ENCODE measurements at regions of chr3 and their contacts with region 1.

Region 1: DNA sequence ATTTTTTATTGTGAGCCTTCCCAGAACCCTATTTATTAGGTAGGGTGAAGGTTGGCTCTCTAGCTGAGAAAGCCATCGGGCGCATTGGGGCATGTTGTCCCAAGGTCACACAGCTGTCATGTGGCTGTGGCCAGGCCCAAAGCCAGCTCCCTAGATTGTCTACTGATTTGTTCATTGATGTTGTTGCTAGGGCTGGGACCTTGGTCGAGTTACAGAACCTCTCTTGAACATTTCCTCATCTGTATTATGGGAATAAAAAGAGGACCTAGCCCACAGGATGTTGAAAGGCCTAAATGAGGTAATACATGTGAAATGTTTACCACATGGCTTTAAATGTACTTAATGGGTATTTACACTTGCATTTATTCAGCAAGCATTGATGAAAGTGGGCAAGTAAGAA is 252.5 kb downstream of the SUCLG2 start:
- DNase-seq: no peak
- H3K4me3 ChIP-seq: no peak overlapping the region
- H3K27ac ChIP-seq: no peak overlapping the region
- H3K4me1 ChIP-seq: no peaks in the 10 kb centered on the region
- H3K27me3 ChIP-seq: no peaks in the 10 kb centered on the region
- CTCF ChIP-seq: no peak
- EP300 ChIP-seq: no peak
- RAD21 ChIP-seq: no peak

Region 2: GRCh38 chr3:67384760-67385397 is 17.0 kb before region 1 on chr3:
- CTCF ChIA-PET with region 1: interaction called, 10 read pairs
- POLR2A ChIA-PET with region 1: no interaction called
- DNase-seq: peak; percentile 42
- H3K4me3 ChIP-seq: no peak overlapping the region
- H3K27ac ChIP-seq: no peak overlapping the region
- H3K4me1 ChIP-seq: no peaks in the 10 kb centered on the region
- H3K27me3 ChIP-seq: no peaks in the 10 kb centered on the region
- CTCF ChIP-seq: peak; percentile 71
- EP300 ChIP-seq: no peak
- RAD21 ChIP-seq: peak; percentile 77